ENCODE measurements at regions of chr2 and their contacts with region 1.

Region 1: GRCh38 chr2:181104512-181105115 is 124.2 kb downstream of the UBE2E3 start:
- DNase-seq: no peak
- H3K4me3 Mint-ChIP-seq: peak overlapping the region; percentile 19
- H3K27ac Mint-ChIP-seq: peak overlapping the region; percentile 34
- H3K4me1 Mint-ChIP-seq: peaks cover 51% of the 10 kb centered on the region
- H3K27me3 Mint-ChIP-seq: no peaks in the 10 kb centered on the region

Region 2: DNA sequence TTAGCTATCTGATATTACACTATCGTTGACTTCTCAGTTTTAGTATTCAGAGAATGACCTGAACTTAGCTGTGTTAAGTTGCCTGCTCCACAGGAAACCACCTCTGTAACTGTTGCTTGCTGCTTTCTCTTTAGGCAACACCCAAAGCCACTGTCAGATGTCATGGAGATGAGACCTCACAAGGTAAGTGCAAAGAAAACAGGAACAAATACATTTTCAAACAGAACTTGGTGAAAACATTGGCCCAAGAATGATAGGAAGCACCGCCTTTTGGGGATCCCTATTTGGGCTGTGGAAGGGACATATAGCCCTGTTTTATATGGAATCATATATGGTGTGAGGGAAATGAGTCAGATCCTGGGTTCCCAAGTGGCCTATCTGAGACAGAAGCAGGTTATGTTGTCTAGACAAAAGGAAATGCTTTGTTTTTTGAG is 19.2 kb after region 1 on chr2:
- CTCF ChIA-PET with region 1: interaction called, 9 read pairs
- POLR2A ChIA-PET with region 1: interaction called, 114 read pairs
- DNase-seq: peak; percentile 75
- H3K4me3 Mint-ChIP-seq: peak overlapping the region; percentile 48
- H3K27ac Mint-ChIP-seq: peak overlapping the region; percentile 85
- H3K4me1 Mint-ChIP-seq: peaks cover 74% of the 10 kb centered on the region
- H3K27me3 Mint-ChIP-seq: no peaks in the 10 kb centered on the region

Region 3: DNA sequence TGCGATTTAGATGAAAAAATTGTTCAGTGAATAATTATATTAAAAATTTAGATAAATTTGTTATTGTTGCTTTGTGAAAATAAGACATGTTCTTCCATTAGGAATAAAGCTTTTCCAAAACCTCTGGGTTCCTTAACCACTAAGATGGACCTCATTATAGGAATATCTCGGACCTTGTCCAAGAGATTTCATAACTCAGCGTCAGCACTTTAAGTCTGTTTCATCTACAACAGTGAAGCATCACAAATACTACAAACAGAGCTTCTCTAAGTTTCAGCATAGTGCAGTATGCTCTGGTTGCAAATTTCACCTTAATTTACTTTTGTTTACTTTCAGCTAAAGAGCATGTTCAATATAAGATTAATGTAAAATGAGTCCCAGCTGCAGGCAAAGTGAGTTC is 26.1 kb after region 1 on chr2:
- CTCF ChIA-PET with region 1: interaction called, 10 read pairs
- POLR2A ChIA-PET with region 1: interaction called, 114 read pairs
- DNase-seq: no peak
- H3K4me3 Mint-ChIP-seq: peak overlapping the region; percentile 67
- H3K27ac Mint-ChIP-seq: peak overlapping the region; percentile 87
- H3K4me1 Mint-ChIP-seq: peaks cover 65% of the 10 kb centered on the region
- H3K27me3 Mint-ChIP-seq: no peaks in the 10 kb centered on the region

Region 4: DNA sequence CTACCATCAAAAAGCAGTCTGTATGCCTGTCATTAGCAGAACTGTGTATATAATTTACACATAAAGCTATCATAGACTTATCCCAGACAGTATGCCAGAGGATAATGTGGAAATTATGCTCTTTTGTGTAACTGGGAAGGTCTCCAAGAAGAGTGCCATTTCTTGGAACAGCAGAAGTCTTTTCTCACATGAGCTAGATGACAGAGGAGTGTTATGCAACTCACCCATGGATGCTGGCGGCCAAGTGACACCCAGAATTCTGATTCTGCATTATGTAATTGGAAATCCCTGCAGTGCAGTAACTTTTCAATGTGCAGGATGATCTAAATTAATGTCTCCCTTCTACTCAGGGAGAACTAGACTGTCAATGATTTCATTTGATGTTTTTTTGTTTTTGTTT is 35.8 kb after region 1 on chr2:
- CTCF ChIA-PET with region 1: interaction called, 5 read pairs
- POLR2A ChIA-PET with region 1: interaction called, 24 read pairs
- DNase-seq: no peak
- H3K4me3 Mint-ChIP-seq: peak overlapping the region; percentile 65
- H3K27ac Mint-ChIP-seq: peak overlapping the region; percentile 79
- H3K4me1 Mint-ChIP-seq: peaks cover 76% of the 10 kb centered on the region
- H3K27me3 Mint-ChIP-seq: no peaks in the 10 kb centered on the region

Region 5: GRCh38 chr2:181312515-181312927 is 207.9 kb after region 1 on chr2:
- CTCF ChIA-PET with region 1: interaction called, 4 read pairs
- POLR2A ChIA-PET with region 1: interaction called, 35 read pairs
- DNase-seq: peak; percentile 66
- H3K4me3 Mint-ChIP-seq: peak overlapping the region; percentile 67
- H3K27ac Mint-ChIP-seq: peak overlapping the region; percentile 90
- H3K4me1 Mint-ChIP-seq: peaks cover 50% of the 10 kb centered on the region
- H3K27me3 Mint-ChIP-seq: no peaks in the 10 kb centered on the region

Region 6: DNA sequence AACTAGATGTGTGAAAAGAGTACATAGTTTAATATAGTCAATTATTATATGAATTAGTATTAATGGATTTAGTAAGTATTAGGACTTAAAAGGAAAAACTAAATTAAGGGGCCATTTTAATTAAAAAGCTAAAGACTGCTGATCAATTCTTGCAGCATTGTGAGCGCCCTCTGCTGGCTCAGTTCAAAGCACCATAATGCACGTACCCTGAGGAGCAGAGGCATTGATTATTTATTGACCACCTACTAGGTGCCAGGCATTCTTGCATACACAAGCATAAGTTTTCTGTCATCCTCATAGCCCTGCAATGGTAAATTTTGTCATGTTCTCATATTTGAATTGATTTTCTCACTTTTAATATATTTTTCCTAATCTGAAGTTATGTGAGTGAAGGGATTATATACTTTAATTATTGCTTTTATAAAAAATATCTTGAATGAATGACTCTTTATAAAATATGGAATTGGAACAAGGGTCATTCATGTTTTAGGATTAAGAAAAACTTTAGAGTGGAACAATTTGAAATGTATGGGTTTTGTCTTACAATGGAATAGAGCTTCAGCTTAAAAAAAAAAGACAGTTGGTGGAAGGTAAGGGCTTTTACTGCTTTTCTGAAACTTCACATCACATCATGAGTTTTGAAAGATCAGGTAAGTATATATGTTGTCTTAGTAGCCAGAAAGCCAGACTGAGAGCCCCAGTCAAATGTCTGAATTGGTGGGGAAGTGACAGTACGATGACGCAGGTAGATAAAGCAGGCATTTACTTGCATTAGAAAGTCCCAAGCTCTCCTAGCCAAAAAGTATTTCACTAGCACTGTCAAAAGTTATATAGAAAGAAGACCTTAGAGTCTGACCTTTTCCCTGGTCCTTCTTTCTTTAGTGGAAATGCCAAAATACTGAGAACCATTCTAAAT is 362.3 kb after region 1 on chr2:
- CTCF ChIA-PET with region 1: interaction called, 69 read pairs
- POLR2A ChIA-PET with region 1: interaction called, 229 read pairs
- DNase-seq: peak; percentile 84
- H3K4me3 Mint-ChIP-seq: peak overlapping the region; percentile 29
- H3K27ac Mint-ChIP-seq: peak overlapping the region; percentile 41
- H3K4me1 Mint-ChIP-seq: peaks cover 90% of the 10 kb centered on the region
- H3K27me3 Mint-ChIP-seq: no peaks in the 10 kb centered on the region

Region 7: GRCh38 chr2:181715033-181715630 is 610.5 kb after region 1 on chr2:
- CTCF ChIA-PET with region 1: interaction called, 15 read pairs
- POLR2A ChIA-PET with region 1: no interaction called
- DNase-seq: peak; percentile 73
- H3K4me3 Mint-ChIP-seq: no peak overlapping the region
- H3K27ac Mint-ChIP-seq: no peak overlapping the region
- H3K4me1 Mint-ChIP-seq: no peaks in the 10 kb centered on the region
- H3K27me3 Mint-ChIP-seq: peaks cover 7% of the 10 kb centered on the region

Measured in activated CD4-positive, alpha-beta memory T cell treated with anti-CD3 and anti-CD28 coated beads, Interleukin-2, amount 10 ng/mL, durations not matched to agents 7 days and 5 days (primary cell).